Adrenal gland (tissue), 19 donors: ENCODE measurements at regions of chr1 and their contacts with region 1.

Region 1: GRCh38 chr1:35573198-35574090 is at the start of gene TFAP2E:
- DNase-seq: peak in 3 of 7 donors; percentile 43 to 51 (median 45)
- H3K4me3 ChIP-seq: peak within 1 kb of the TSS in 1 of 4 donors; percentile 62
- H3K27ac ChIP-seq: no peak within 1 kb of the TSS
- H3K4me1 ChIP-seq: peaks cover 6 to 31% of the 10 kb centered on the region in 2 donors
- H3K27me3 ChIP-seq: peaks cover 31% of the 10 kb centered on the region
- CTCF ChIP-seq: peak in 1 of 6 experiments; percentile 3
- POLR2A ChIP-seq: no peak
- total RNA-seq, gene TFAP2E: 0.21 to 0.69 (median 0.46) TPM in 6 of 9 donors, not detected in the others

Region 2: GRCh38 chr1:35431173-35431599 is 142.3 kb before region 1 on chr1:
- intact Hi-C with region 1: no loop called
- DNase-seq: no peak
- H3K4me3 ChIP-seq: no peak overlapping the region
- H3K27ac ChIP-seq: no peak overlapping the region
- H3K4me1 ChIP-seq: no peaks in the 10 kb centered on the region
- H3K27me3 ChIP-seq: no peaks in the 10 kb centered on the region
- CTCF ChIP-seq: no peak
- POLR2A ChIP-seq: no peak

Region 3: GRCh38 chr1:35637401-35637809 is 64.0 kb after region 1 on chr1:
- intact Hi-C with region 1: no loop called
- DNase-seq: no peak
- H3K4me3 ChIP-seq: peak overlapping the region in 1 of 4 donors; percentile 37
- H3K27ac ChIP-seq: peak overlapping the region in 4 of 5 donors; percentile 57 to 79 (median 65)
- H3K4me1 ChIP-seq: peaks cover 15 to 42% of the 10 kb centered on the region in 2 donors
- H3K27me3 ChIP-seq: no peaks in the 10 kb centered on the region
- CTCF ChIP-seq: no peak
- POLR2A ChIP-seq: no peak

Region 4: DNA sequence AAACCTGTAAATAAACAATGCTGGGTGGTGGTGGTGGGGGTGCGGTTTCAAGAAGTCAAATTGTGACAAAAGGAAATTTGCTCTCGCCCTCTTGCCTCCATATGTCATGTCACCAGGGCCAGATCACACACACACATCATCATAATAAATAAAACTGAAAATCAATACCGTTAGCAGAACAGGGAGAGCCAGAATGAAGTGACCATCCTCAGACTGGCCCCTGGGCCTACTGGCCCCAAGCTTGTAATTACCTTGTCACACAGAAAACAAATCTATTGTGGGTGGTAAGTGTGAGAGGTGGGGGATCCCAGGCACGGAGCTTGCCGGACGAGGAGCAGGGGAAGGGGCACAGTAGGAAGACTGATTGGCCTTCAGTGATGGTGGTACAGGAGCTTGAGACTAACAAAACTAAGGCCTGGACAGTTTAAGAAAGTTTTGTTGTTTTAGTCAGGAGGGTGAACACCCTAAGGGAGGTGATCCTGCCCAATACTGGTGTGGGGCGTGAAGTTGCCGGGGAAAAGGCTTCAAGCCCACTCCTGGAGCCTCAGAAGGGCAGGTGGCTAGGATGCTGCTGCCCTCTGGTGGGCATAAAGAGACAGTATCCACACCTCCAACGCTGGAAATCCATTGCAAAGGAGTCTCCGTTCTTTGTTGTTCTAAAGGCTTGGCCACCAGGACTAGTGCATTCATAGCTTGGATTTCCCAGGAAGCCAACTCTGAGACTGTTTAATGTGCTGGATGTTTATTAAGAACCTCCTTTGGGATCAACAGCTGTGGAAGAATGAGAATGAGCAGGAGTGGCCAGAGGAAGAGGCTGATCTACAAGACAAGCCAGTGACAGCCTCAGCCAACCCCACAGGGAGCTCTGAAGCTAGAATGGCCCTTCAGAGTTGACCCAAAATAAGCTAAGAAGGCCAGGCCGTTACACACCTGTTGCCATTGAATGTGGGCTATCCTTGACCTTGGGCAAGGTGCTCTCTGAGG is 153.3 kb after region 1 on chr1:
- intact Hi-C with region 1: loop called (anchors 2 to 5 kb)
- DNase-seq: peak; percentile 27 to 78 (median 53)
- H3K4me3 ChIP-seq: no peak overlapping the region
- H3K27ac ChIP-seq: no peak overlapping the region
- H3K4me1 ChIP-seq: no peaks in the 10 kb centered on the region
- H3K27me3 ChIP-seq: no peaks in the 10 kb centered on the region
- CTCF ChIP-seq: peak; percentile 68 to 86 (median 78)
- POLR2A ChIP-seq: no peak

Region 5: DNA sequence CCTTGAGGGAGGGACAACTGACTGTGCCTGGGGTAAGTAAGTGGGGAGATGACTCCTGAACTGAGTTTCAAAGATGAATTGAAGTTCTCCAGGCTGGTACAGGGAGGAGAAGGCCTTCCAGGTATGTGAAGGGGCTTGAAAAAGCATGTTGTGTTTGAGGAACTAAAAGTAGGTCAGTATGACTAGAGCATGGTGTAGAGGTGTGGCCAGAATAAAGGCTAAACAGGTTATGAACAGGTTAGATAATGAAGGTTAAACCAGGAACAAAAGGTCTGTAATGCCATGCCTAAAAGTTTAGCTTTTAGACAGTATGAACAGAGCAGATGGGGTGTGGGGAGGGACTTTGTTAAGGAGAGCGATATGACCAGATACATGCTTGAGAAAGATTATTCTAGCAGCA is 203.7 kb after region 1 on chr1:
- intact Hi-C with region 1: loop called in 1 of 2 experiments (anchors 5 kb)
- DNase-seq: no peak
- H3K4me3 ChIP-seq: no peak overlapping the region
- H3K27ac ChIP-seq: no peak overlapping the region
- H3K4me1 ChIP-seq: no peaks in the 10 kb centered on the region
- H3K27me3 ChIP-seq: no peaks in the 10 kb centered on the region
- CTCF ChIP-seq: no peak
- POLR2A ChIP-seq: no peak

Region 6: GRCh38 chr1:35851132-35851869 is 277.9 kb after region 1 on chr1:
- intact Hi-C with region 1: no loop called
- DNase-seq: peak in 2 of 7 donors; percentile 4 to 40
- H3K4me3 ChIP-seq: no peak overlapping the region
- H3K27ac ChIP-seq: no peak overlapping the region
- H3K4me1 ChIP-seq: peaks cover 0 to 3% of the 10 kb centered on the region in 2 donors
- H3K27me3 ChIP-seq: no peaks in the 10 kb centered on the region
- CTCF ChIP-seq: no peak
- POLR2A ChIP-seq: no peak